Activated T-helper 1 cell treated with anti-CD3 and anti-CD28 coated beads, Interleukin-12 subunit alpha, Interleukin-12 subunit beta, Interleukin-2, Interleukin-4 antibody, amounts not matched to agents 30 ng/mL and 10 ng/mL and 1 ng/mL, durations not matched to agents 14 hours and 24 hours and 36 hours (primary cell): ENCODE measurements at regions of chr15 and their contacts with region 1.

Region 1: DNA sequence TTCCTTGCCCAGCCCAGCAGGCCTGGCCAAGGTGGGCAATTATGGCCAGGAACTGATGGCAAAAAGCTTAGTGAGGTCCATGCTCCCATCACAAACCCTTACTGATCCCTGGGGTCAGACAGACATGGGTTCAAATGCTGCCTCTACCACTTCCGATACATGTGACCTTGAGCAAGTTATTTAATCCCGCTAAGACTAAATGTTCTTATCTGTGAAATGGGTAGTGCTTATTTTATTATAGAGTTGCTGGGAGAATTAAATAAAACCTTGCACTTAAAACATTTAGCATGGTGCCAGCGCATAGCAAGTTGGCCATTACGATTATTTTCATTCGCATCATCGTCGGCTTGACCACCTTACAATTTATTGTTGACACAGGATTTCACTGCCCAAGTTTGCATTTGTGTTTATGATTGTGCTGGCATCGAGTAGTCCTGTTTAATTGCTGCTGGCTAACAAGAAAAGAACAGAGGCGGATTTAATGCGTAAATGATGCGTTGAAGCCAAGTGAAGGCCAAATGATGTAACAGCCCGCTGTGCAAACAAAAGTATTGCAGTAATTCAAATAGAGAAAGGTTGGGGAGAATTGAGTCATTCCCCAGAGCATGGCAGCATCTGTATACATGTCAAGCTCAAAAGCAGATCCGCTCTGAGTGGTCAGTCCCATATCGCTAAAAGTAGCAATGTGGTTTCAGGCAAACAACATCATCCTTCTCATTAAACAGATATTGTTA is 7.3 kb upstream of the FURIN start:
- DNase-seq: no peak
- H3K4me3 Mint-ChIP-seq: no peak overlapping the region
- H3K27ac Mint-ChIP-seq: peak overlapping the region; percentile 55
- H3K4me1 Mint-ChIP-seq: peaks cover 71% of the 10 kb centered on the region
- H3K27me3 Mint-ChIP-seq: no peaks in the 10 kb centered on the region

Region 2: DNA sequence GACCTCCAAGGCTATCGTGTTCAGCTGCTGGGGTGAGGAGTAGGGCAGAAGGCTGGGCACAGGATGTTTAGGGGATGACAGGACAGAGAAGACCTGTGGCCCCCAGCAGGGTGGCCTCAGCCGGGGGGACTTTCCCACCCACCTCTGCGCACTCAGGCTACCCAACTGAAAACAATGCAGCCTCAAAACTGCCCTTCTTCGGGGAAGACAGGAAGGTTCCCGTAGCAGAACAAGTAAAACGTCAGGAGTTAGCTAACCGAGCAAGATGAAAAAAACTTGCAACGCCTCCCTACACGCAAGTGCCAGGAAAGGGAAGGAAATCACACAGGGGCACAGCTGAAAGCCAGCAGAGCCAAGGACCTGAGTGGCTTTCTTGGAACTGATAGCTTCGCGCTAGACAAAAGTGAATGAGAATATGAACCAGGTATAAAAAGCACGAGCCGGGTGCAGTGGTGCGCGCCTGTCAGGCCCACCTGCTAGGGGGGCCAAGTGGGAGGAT is 31.1 kb before region 1 on chr15:
- intact Hi-C with region 1: loop called (anchors 1 kb)
- DNase-seq: peak; percentile 82
- H3K4me3 Mint-ChIP-seq: peak overlapping the region; percentile 75
- H3K27ac Mint-ChIP-seq: peak overlapping the region; percentile 91
- H3K4me1 Mint-ChIP-seq: peaks cover 69% of the 10 kb centered on the region
- H3K27me3 Mint-ChIP-seq: no peaks in the 10 kb centered on the region

Region 3: DNA sequence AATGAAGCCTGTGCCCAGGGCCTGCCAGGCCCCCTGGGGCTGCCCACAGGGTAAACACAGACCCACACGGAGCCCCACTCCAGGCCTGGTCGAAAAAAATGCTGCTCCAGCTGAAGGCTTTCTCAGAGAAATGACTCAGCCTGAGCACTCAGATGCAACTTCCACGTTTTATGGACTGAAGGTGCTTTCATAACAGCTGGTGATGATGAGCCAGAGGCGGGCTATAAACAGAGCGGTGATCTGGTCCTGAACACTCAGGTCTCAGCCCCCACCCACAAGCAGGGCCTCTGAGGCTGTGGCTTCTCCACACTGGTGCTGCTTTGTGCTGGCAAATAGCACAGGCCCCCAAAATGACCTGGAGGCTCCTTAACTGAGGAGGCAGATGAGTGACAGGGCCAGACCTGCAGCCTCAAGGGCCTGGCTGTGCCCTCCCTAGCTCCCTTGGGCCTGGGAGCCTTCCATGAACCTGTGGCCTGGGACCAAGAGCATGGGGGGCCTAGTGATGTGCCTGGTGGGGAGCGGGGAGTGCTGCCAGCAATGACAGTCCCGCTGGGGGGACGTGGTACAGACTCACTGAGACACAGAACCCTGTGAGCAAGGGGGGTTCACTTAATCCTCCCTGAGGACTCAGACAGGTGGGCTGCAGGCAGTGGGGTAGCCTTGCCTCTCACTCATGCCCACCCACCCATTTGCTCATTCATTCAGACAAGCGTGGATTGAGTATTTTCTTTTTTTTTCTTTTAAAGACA is 15.7 kb before region 1 on chr15:
- intact Hi-C with region 1: loop called (anchors 1 kb)
- DNase-seq: peak; percentile 68
- H3K4me3 Mint-ChIP-seq: peak overlapping the region; percentile 53
- H3K27ac Mint-ChIP-seq: peak overlapping the region; percentile 97
- H3K4me1 Mint-ChIP-seq: peaks cover 62% of the 10 kb centered on the region
- H3K27me3 Mint-ChIP-seq: no peaks in the 10 kb centered on the region